ENCODE measurements at regions of chr4 and their contacts with region 1.

Region 1: DNA sequence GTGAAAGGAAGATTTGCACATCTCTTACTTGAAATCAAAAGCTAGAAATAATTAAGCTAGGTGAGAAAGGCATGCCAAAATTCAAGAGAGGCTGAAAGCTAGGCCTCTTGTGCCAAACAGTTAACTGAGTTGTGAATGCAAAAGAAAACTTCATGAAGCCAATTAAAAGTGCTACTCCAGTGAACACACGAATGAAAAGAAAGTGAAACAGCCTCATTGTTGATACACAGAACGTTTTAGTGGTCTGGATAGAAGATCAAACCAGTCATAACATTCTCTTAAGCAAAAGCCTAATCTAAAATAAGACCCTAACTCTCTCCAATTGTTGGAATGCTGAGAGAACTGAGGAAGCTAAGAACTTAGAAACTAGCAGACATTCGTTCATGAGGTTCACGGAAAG is 122.3 kb downstream of the UNC5C start:
- DNase-seq: no peak
- ATAC-seq: no peak
- H3K4me3 Mint-ChIP-seq: no peak overlapping the region
- H3K27ac Mint-ChIP-seq: no peak overlapping the region
- H3K4me1 Mint-ChIP-seq: no peaks in the 10 kb centered on the region
- H3K27me3 Mint-ChIP-seq: no peaks in the 10 kb centered on the region

Region 2: DNA sequence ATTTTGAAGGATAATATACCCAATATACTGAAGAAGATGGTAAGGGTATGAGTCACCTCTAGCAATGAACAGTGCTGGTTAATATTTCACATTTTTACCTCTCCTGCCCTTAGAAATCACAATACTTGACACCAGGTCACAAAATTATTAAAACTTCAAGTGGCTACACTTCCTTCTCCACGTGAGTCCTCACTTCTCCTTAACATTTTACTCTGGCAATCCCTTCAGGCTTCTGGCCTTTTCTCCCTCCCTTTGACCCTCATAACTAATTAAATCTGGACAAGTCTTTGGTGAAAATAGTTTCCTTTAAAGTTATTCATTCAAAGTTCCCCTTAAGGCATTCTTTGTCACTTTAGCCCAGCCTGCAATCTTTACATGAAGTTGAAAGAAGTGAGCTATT is 68.0 kb before region 1 on chr4:
- CTCF ChIA-PET with region 1: no interaction called
- POLR2A ChIA-PET with region 1: no interaction called
- intact Hi-C with region 1: loop called in 1 of 2 experiments (anchors 2 kb)
- DNase-seq: no peak
- ATAC-seq: no peak
- H3K4me3 Mint-ChIP-seq: no peak overlapping the region
- H3K27ac Mint-ChIP-seq: no peak overlapping the region
- H3K4me1 Mint-ChIP-seq: no peaks in the 10 kb centered on the region
- H3K27me3 Mint-ChIP-seq: no peaks in the 10 kb centered on the region

Region 3: GRCh38 chr4:95394752-95395306 is 31.6 kb before region 1 on chr4:
- CTCF ChIA-PET with region 1: no interaction called
- POLR2A ChIA-PET with region 1: no interaction called
- intact Hi-C with region 1: no loop called
- DNase-seq: no peak
- ATAC-seq: no peak
- H3K4me3 Mint-ChIP-seq: no peak overlapping the region
- H3K27ac Mint-ChIP-seq: no peak overlapping the region
- H3K4me1 Mint-ChIP-seq: no peaks in the 10 kb centered on the region
- H3K27me3 Mint-ChIP-seq: peaks cover 2% of the 10 kb centered on the region

Region 4: GRCh38 chr4:95439896-95440295 is 13.4 kb after region 1 on chr4:
- CTCF ChIA-PET with region 1: no interaction called
- POLR2A ChIA-PET with region 1: no interaction called
- intact Hi-C with region 1: no loop called
- DNase-seq: no peak
- ATAC-seq: no peak
- H3K4me3 Mint-ChIP-seq: no peak overlapping the region
- H3K27ac Mint-ChIP-seq: no peak overlapping the region
- H3K4me1 Mint-ChIP-seq: no peaks in the 10 kb centered on the region
- H3K27me3 Mint-ChIP-seq: no peaks in the 10 kb centered on the region

Region 5: GRCh38 chr4:95549246-95550114 is 123.0 kb after region 1 on chr4:
- CTCF ChIA-PET with region 1: no interaction called
- POLR2A ChIA-PET with region 1: no interaction called
- intact Hi-C with region 1: no loop called
- DNase-seq: peak; percentile 59
- ATAC-seq: peak; percentile 85
- H3K4me3 Mint-ChIP-seq: peak overlapping the region; percentile 66
- H3K27ac Mint-ChIP-seq: no peak overlapping the region
- H3K4me1 Mint-ChIP-seq: peaks cover 20% of the 10 kb centered on the region
- H3K27me3 Mint-ChIP-seq: peaks cover 56% of the 10 kb centered on the region

Measured in activated CD4-positive, alpha-beta T cell treated with anti-CD3 and anti-CD28 coated beads for 36 hours (primary cell).